ENCODE measurements at regions of chr1 and their contacts with region 1.

Region 1: GRCh38 chr1:92994105-92994712 is 32.9 kb upstream of the DIPK1A start:
- DNase-seq: peak; percentile 79
- ATAC-seq: peak; percentile 92

Region 2: GRCh38 chr1:92858564-92859399 is 135.4 kb before region 1 on chr1:
- intact Hi-C with region 1: loop called (anchors 5 kb)
- DNase-seq: no peak
- ATAC-seq: peak; percentile 84

Region 3: GRCh38 chr1:93033785-93034184 is 39.6 kb after region 1 on chr1:
- intact Hi-C with region 1: no loop called
- DNase-seq: no peak
- ATAC-seq: no peak